Stomach (tissue), 19 donors: ENCODE measurements at regions of chr11 and their contacts with region 1.

Region 1: GRCh38 chr11:85854557-85855340 is 434 bp upstream of the CCDC83 start:
- DNase-seq: peak; percentile 94 to 98
- H3K4me3 ChIP-seq: peak overlapping the region; percentile 45 to 66 (median 50)
- H3K27ac ChIP-seq: peak overlapping the region; percentile 84 to 95 (median 87)
- H3K4me1 ChIP-seq: peaks cover 7 to 18% (median 11%) of the 10 kb centered on the region in 4 donors
- H3K27me3 ChIP-seq: no peaks in the 10 kb centered on the region
- CTCF ChIP-seq: peak in 6 of 7 experiments; percentile 40 to 98 (median 94)
- EP300 ChIP-seq: no peak
- POLR2A ChIP-seq: peak in 1 of 4 donors; percentile 11

Region 2: GRCh38 chr11:85725510-85726258 is 129.1 kb before region 1 on chr11:
- intact Hi-C with region 1: no loop called
- DNase-seq: peak in 1 of 2 donors; percentile 46
- H3K4me3 ChIP-seq: no peak overlapping the region
- H3K27ac ChIP-seq: peak overlapping the region in 1 of 5 donors; percentile 15
- H3K4me1 ChIP-seq: no peaks in the 10 kb centered on the region
- H3K27me3 ChIP-seq: no peaks in the 10 kb centered on the region
- CTCF ChIP-seq: no peak
- EP300 ChIP-seq: no peak
- POLR2A ChIP-seq: no peak

Region 3: GRCh38 chr11:85737748-85738147 is 117.0 kb before region 1 on chr11:
- intact Hi-C with region 1: no loop called
- DNase-seq: peak in 1 of 2 donors; percentile 69
- H3K4me3 ChIP-seq: no peak overlapping the region
- H3K27ac ChIP-seq: peak overlapping the region in 2 of 5 donors; percentile 2 to 28
- H3K4me1 ChIP-seq: peaks cover 0 to 23% (median 4%) of the 10 kb centered on the region in 4 donors
- H3K27me3 ChIP-seq: no peaks in the 10 kb centered on the region
- CTCF ChIP-seq: no peak
- EP300 ChIP-seq: no peak
- POLR2A ChIP-seq: no peak

Region 4: DNA sequence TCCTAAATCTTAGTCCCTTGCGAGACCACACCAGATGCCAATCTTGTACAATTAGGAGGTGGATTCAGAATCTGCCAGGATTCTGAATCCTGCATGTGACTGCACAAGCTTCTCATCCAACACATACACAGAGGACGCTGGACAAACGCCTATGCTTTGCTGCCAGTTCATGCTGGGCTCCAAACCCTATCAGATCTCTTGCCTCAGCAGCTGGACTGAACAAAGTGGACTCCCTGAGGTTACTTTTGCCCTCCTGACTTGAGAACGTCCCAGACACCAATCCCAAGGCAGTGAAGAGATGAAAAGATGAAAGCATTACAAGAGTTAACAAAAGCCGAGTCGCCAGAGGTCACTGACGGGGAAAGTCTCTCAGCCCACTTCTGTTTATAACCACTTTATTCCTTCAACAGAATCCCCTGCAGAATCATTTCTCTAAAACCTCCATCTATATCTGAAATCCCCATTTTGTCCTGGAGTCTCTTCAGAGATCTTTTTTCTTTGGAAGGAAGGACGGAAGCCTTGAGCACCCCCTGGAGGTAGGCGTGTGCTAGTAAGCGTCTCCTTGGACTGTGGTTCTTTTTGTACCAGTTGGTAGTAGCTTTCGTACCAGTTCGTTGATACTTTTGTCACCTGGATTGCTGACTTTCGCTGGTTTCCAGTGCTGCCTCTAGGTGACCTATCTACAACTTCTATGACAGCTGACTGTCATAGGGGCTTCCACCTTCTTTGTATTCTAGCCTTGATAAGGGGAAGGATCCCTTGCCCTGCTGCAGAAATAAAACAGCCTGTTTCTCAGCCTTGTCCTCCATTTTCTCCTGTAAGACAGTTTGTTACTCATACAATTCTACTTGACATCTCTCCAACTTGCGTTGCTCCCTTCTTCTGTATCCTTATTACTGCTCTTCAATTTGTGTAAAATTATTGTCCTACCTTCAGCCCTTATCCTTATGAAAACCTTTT is 363.7 kb after region 1 on chr11:
- intact Hi-C with region 1: loop called (anchors 10 kb)
- DNase-seq: peak; percentile 64 to 90
- H3K4me3 ChIP-seq: peak overlapping the region; percentile 6 to 33 (median 22)
- H3K27ac ChIP-seq: peak overlapping the region in 1 of 5 donors; percentile 7
- H3K4me1 ChIP-seq: peaks cover 0 to 12% (median 9%) of the 10 kb centered on the region in 4 donors
- H3K27me3 ChIP-seq: no peaks in the 10 kb centered on the region
- CTCF ChIP-seq: peak in 5 of 7 experiments; percentile 44 to 85 (median 80)
- EP300 ChIP-seq: no peak
- POLR2A ChIP-seq: no peak

Region 5: GRCh38 chr11:86288776-86289507 is 434.2 kb after region 1 on chr11:
- intact Hi-C with region 1: loop called (anchors 10 kb)
- DNase-seq: no peak
- H3K4me3 ChIP-seq: no peak overlapping the region
- H3K27ac ChIP-seq: no peak overlapping the region
- H3K4me1 ChIP-seq: peaks cover 0 to 5% (median 0%) of the 10 kb centered on the region in 4 donors
- H3K27me3 ChIP-seq: no peaks in the 10 kb centered on the region
- CTCF ChIP-seq: no peak
- EP300 ChIP-seq: no peak
- POLR2A ChIP-seq: no peak